CD8-positive, alpha-beta T cell (primary cell): ENCODE measurements at regions of chr1 and their contacts with region 1.

Region 1: GRCh38 chr1:35769759-35770446 is at the start of gene CLSPN:
- DNase-seq: peak; percentile 86 to 96 (median 93)
- ATAC-seq: peak; percentile 94
- H3K4me3 ChIP-seq: peak within 1 kb of the TSS; percentile 90 to 97
- H3K4me3 Mint-ChIP-seq: peak within 1 kb of the TSS; percentile 99
- H3K27ac ChIP-seq: peak within 1 kb of the TSS; percentile 61 to 81
- H3K27ac Mint-ChIP-seq: peak within 1 kb of the TSS; percentile 92
- H3K4me1 ChIP-seq: peaks cover 5% of the 10 kb centered on the region
- H3K4me1 Mint-ChIP-seq: peaks cover 8% of the 10 kb centered on the region
- H3K27me3 ChIP-seq: no peaks in the 10 kb centered on the region
- H3K27me3 Mint-ChIP-seq: no peaks in the 10 kb centered on the region
- CTCF ChIP-seq: no peak
- total RNA-seq, gene CLSPN: 0.41 to 0.81 TPM

Region 2: GRCh38 chr1:35641233-35641866 is 128.6 kb before region 1 on chr1 and contains the start of gene PSMB2:
- CTCF ChIA-PET with region 1: no interaction called
- POLR2A ChIA-PET with region 1: no interaction called
- intact Hi-C with region 1: loop called (anchors 1 to 5 kb)
- DNase-seq: peak; percentile 91 to 99 (median 97)
- ATAC-seq: peak; percentile 94
- H3K4me3 ChIP-seq: peak within 1 kb of the TSS; percentile 94 to 97
- H3K4me3 Mint-ChIP-seq: peak within 1 kb of the TSS; percentile 100
- H3K27ac ChIP-seq: peak within 1 kb of the TSS; percentile 89 to 93
- H3K27ac Mint-ChIP-seq: peak within 1 kb of the TSS; percentile 97
- H3K4me1 ChIP-seq: peaks cover 33% of the 10 kb centered on the region
- H3K4me1 Mint-ChIP-seq: peaks cover 37% of the 10 kb centered on the region
- H3K27me3 ChIP-seq: peaks cover 0 to 8% of the 10 kb centered on the region in 2 experiments
- H3K27me3 Mint-ChIP-seq: peaks cover 16% of the 10 kb centered on the region
- CTCF ChIP-seq: no peak
- total RNA-seq, gene PSMB2: 36.8 to 38.8 TPM

Region 3: DNA sequence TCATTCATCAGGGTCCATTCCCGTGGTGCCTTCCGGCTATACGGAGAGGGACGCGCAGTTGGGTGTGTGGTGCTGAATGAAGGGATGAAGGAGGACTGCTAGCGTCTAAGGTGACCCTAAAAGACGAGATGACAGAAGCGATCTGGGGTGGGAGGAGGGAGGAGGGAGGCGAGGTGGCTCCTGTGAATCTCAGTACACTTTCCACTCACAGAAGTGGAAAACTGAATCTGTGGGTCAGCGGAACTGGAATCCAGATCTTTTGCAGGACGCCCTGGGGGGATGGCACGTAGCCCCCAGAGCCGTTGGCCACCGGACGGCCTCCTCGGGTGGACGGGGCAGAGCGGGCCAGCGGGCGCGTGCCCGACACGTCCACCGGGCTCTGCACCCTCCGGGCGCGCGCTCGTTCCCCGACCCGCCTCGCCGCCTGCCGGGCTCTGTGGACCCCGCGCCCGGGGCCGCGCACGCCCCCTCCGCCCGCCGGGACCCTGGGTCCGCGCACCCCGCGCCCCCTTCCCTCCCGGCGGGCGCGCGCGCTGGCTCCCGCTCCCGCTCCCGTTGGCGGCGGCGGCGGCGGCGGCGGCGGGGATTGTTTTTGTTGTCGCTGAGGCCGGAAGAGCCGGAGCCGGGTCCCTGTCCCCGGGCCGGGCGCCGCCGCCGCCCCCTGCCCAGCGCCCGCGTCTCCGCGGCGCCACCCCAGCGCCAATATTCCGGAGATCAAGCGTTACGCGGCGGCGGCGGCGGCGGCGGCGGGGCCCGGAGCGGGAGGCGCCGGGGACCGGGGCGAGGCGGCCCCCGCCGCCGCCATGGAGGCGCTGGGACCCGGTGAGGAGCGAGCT is 37.9 kb after region 1 on chr1 and contains the start of gene AGO4:
- CTCF ChIA-PET with region 1: no interaction called
- POLR2A ChIA-PET with region 1: no interaction called
- intact Hi-C with region 1: loop called in 1 of 2 experiments (anchors 5 kb)
- DNase-seq: peak in 8 of 9 experiments; percentile 13 to 67 (median 36)
- ATAC-seq: peak; percentile 45
- H3K4me3 ChIP-seq: peak within 1 kb of the TSS; percentile 49 to 84
- H3K4me3 Mint-ChIP-seq: peak within 1 kb of the TSS; percentile 94
- H3K27ac ChIP-seq: peak within 1 kb of the TSS; percentile 47 to 70
- H3K27ac Mint-ChIP-seq: peak within 1 kb of the TSS; percentile 90
- H3K4me1 ChIP-seq: peaks cover 17% of the 10 kb centered on the region
- H3K4me1 Mint-ChIP-seq: peaks cover 50% of the 10 kb centered on the region
- H3K27me3 ChIP-seq: no peaks in the 10 kb centered on the region
- H3K27me3 Mint-ChIP-seq: no peaks in the 10 kb centered on the region
- CTCF ChIP-seq: no peak
- total RNA-seq, gene AGO4: 5.4 to 5.7 TPM

Region 4: DNA sequence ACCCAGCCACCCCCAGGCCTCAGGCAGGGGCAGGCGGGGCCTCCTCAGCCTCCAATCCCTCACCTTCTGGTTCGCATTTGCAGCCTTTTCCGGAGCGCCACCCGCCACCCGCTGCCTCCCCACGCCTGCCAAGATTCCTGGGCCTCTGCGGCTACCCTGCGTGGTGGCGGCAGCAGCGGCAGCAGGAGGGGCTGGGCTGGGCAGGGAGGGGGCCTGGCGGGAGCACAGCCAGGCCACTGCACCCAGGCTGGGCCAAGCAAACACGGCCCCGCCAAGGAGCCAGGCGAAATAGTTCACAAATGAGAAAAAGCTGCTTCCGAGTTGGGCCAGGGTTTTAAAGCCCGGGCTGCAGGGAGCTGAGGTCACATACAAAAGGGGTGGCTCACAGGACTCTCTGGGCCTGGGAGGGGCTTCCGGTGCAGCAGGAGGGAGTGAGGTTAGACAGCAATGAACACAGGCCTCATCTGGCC is 345.3 kb after region 1 on chr1:
- CTCF ChIA-PET with region 1: no interaction called
- POLR2A ChIA-PET with region 1: no interaction called
- intact Hi-C with region 1: no loop called
- DNase-seq: no peak
- ATAC-seq: no peak
- H3K4me3 ChIP-seq: no peak overlapping the region
- H3K4me3 Mint-ChIP-seq: no peak overlapping the region
- H3K27ac ChIP-seq: no peak overlapping the region
- H3K27ac Mint-ChIP-seq: no peak overlapping the region
- H3K4me1 ChIP-seq: peaks cover 14% of the 10 kb centered on the region
- H3K4me1 Mint-ChIP-seq: peaks cover 12% of the 10 kb centered on the region
- H3K27me3 ChIP-seq: no peaks in the 10 kb centered on the region
- H3K27me3 Mint-ChIP-seq: no peaks in the 10 kb centered on the region
- CTCF ChIP-seq: no peak